ENCODE measurements at regions of chr1 and their contacts with region 1.

Region 1: DNA sequence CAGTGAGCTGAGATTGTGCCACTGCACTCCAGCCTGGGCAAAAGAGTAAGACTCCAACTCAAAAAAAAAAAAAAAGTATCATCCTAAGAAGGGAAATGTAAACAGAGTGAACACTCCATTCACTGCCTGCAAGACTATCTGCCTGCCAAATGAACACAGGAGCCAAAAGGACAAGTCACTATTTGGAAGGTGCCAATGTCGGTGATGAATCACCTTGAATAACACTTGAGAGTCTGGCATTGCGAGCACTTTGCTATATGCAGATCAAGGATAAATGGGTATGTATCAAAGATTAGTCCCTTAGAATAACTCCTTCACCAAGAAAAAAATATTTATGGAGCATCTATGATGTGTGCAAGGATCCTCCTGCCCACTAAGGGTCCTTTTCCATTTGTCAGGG is 6.6 kb downstream of the UBR4 start:
- DNase-seq: no peak
- ATAC-seq: peak; percentile 47
- H3K4me3 Mint-ChIP-seq: no peak overlapping the region
- H3K27ac Mint-ChIP-seq: no peak overlapping the region
- H3K4me1 Mint-ChIP-seq: peaks cover 62% of the 10 kb centered on the region
- H3K27me3 Mint-ChIP-seq: no peaks in the 10 kb centered on the region

Region 2: GRCh38 chr1:19315378-19316198 is 112.1 kb after region 1 on chr1:
- CTCF ChIA-PET with region 1: no interaction called
- POLR2A ChIA-PET with region 1: no interaction called
- intact Hi-C with region 1: no loop called
- DNase-seq: no peak
- ATAC-seq: no peak
- H3K4me3 Mint-ChIP-seq: no peak overlapping the region
- H3K27ac Mint-ChIP-seq: peak overlapping the region; percentile 14
- H3K4me1 Mint-ChIP-seq: peaks cover 21% of the 10 kb centered on the region
- H3K27me3 Mint-ChIP-seq: no peaks in the 10 kb centered on the region

Region 3: DNA sequence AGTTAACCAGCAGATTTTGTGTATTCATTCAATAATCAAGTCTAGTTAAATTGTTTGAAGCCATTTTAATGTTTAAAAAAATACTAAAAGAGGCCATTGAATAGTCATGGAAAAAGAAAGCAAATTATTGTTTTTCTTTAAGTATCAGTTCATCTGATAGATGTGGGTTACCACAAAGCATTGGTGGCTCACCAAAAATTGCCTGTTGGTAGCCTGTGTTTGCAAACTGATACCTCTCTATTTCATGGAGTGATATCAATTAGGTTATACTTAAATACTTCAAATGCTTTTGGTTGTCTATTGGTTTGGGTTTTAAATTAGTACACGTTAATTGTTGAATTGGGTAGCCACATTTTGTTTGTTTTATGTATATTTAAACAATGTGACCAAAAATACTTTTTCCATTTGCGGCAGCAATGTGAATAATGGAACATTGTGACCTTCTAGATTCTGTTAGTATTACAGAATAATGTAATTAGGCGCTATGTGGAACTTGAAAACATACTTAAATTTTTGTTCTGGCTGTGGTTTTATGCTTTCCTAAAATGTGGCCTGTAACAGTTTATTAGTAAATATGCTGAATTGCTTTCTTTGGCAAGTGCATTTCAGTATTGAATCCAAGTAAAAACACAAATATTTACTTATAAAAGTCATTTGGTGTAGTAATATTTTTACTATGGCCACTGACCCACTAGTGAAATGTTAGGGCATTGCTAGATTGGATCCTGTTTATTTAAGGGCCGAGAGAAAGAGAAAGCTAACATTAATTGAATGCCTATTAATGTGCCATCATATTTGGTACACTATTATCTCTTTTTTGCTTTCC is 403.6 kb after region 1 on chr1:
- CTCF ChIA-PET with region 1: no interaction called
- POLR2A ChIA-PET with region 1: interaction called, 10 read pairs
- intact Hi-C with region 1: no loop called
- DNase-seq: peak; percentile 70
- ATAC-seq: peak; percentile 61
- H3K4me3 Mint-ChIP-seq: no peak overlapping the region
- H3K27ac Mint-ChIP-seq: peak overlapping the region; percentile 72
- H3K4me1 Mint-ChIP-seq: peaks cover 58% of the 10 kb centered on the region
- H3K27me3 Mint-ChIP-seq: no peaks in the 10 kb centered on the region